Activated naive CD4-positive, alpha-beta T cell treated with anti-CD3 and anti-CD28 coated beads for 36 hours (primary cell): ENCODE measurements at regions of chr14 and their contacts with region 1.

Region 1: DNA sequence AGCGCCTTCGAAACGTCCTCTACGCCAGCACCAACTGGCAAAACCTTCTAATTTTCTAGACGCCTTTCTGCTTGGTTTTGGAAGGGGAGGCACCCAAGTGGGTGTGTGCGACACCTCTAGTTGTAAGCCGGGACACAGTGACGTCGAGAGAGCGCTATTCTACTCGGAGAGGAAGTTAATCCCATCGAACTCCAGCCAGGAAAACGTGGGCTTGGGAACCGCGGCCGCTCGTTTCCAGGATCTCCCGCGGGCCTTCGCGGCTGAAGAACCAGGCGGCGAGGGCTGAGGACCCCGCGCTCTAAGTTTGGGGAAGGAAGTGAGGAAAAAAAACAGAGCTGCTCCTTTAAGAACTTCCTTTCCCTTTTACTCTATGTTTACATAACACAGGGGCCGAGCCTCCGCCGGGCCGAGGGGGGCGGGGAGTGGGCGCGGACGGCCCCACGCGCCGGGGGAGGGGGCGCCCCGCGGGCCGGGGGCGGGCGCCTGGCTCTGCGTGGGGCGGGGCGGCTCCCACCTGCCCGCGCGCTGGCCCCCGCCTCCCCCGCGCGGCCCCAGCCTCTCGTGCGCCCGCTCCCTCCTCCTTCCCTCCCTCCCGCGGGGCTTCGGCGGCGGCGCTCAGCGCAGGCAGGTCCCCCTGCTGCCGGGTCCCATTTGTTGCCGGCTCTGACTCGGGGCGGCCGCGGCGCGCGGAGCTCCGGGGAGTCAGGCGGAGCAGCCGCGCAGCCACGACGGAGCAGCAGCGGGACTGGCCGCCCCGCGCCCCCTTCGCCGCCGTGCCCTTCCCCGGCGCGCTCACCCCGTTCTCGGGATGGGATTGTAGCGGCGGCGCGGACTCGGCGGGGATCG is at the start of gene PELI2:
- DNase-seq: peak; percentile 70
- H3K4me3 Mint-ChIP-seq: peak within 1 kb of the TSS; percentile 86
- H3K27ac Mint-ChIP-seq: peak within 1 kb of the TSS; percentile 76
- H3K4me1 Mint-ChIP-seq: peaks cover 40% of the 10 kb centered on the region
- H3K27me3 Mint-ChIP-seq: peaks cover 17% of the 10 kb centered on the region
- total RNA-seq, gene PELI2: 6.2 to 7.8 TPM

Region 2: DNA sequence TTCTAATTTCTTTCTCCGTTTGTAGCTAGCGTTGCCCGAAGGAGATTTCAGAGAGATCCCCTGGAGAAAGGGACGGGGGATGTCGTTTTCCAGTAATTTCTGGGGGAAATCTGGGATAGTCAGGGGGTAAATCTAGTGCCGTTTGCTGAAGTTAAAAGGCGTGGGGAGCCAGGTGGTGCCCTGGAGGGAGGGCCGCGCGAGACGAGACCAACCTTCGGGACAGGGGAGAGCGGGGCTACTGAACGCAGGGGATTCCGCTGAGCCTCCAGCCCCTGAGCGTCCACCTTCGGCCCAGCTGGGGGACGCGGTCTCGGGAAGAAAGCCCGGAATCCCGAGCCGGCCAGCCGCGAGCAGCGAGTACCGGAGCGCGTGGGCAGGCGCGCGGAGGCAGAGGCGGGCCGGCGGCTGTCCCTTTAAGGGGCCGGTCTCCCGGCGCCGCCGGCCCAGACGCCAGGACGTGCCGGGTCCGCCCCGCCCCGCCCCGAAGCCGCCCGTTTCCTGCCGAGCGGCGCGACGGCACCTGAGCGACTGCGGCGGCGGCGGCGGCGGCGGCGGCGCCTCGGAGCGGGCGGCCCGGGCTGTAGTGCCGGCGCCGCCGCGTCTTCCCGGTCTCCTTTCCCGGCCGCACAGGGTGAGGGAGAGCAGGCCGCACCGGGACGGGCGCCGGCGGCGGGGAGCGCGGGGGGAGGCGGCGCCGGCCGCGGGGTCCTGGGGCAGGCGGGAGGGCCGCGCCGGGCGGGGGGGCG is 538.1 kb before region 1 on chr14 and contains the start of gene KTN1:
- CTCF ChIA-PET with region 1: no interaction called
- intact Hi-C with region 1: loop called (anchors 2 kb)
- DNase-seq: peak; percentile 84
- H3K4me3 Mint-ChIP-seq: peak within 1 kb of the TSS; percentile 94
- H3K27ac Mint-ChIP-seq: peak within 1 kb of the TSS; percentile 84
- H3K4me1 Mint-ChIP-seq: peaks cover 30% of the 10 kb centered on the region
- H3K27me3 Mint-ChIP-seq: no peaks in the 10 kb centered on the region
- total RNA-seq, gene KTN1: 90.0 to 94.1 TPM

Region 3: GRCh38 chr14:55807059-55807499 is 310.9 kb before region 1 on chr14:
- CTCF ChIA-PET with region 1: no interaction called
- intact Hi-C with region 1: loop called (anchors 5 kb)
- DNase-seq: peak; percentile 87
- H3K4me3 Mint-ChIP-seq: no peak overlapping the region
- H3K27ac Mint-ChIP-seq: peak overlapping the region; percentile 75
- H3K4me1 Mint-ChIP-seq: peaks cover 37% of the 10 kb centered on the region
- H3K27me3 Mint-ChIP-seq: no peaks in the 10 kb centered on the region

Region 4: DNA sequence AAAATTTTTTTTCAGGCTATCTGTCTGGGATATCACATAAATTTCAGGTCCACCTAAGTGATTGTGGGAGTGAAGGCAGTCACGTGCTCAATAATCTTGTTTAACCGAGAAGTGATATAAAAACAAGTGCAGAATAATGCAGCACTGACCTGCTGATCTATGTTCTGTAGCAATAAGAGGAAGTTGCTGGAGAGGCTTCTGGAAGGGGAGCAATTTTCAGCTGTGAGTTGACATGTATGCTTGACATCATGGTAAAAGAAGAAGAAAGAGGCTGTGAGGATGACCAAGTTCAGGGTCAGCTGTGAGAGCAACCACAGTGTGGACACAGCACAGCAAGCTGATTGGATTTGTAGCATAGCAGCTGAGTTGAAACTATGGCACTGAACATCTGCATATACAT is 171.8 kb before region 1 on chr14:
- CTCF ChIA-PET with region 1: no interaction called
- intact Hi-C with region 1: no loop called
- DNase-seq: no peak
- H3K4me3 Mint-ChIP-seq: no peak overlapping the region
- H3K27ac Mint-ChIP-seq: no peak overlapping the region
- H3K4me1 Mint-ChIP-seq: no peaks in the 10 kb centered on the region
- H3K27me3 Mint-ChIP-seq: peaks cover 16% of the 10 kb centered on the region

Region 5: DNA sequence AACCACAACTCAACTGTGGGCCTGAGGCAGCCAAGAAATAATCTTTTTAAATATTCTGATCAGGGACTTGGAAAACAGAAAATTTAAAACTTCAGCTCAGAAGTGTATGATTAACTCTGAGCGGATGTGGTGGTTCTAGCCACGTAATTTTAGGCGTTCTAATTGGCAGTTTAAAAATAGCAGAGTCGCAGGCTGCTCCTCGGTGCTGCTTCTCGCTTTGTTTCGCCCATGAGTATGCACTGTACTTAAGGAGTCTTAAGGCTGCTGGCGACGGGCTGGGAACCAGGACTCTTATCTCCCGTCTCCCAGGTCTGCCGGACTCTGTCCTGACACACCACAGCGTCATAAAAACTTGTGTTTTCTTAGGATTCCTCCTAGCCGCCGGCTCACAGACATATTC is 113.2 kb before region 1 on chr14:
- CTCF ChIA-PET with region 1: no interaction called
- intact Hi-C with region 1: loop called (anchors 2 kb)
- DNase-seq: peak; percentile 57
- H3K4me3 Mint-ChIP-seq: no peak overlapping the region
- H3K27ac Mint-ChIP-seq: no peak overlapping the region
- H3K4me1 Mint-ChIP-seq: peaks cover 36% of the 10 kb centered on the region
- H3K27me3 Mint-ChIP-seq: peaks cover 60% of the 10 kb centered on the region

Region 6: DNA sequence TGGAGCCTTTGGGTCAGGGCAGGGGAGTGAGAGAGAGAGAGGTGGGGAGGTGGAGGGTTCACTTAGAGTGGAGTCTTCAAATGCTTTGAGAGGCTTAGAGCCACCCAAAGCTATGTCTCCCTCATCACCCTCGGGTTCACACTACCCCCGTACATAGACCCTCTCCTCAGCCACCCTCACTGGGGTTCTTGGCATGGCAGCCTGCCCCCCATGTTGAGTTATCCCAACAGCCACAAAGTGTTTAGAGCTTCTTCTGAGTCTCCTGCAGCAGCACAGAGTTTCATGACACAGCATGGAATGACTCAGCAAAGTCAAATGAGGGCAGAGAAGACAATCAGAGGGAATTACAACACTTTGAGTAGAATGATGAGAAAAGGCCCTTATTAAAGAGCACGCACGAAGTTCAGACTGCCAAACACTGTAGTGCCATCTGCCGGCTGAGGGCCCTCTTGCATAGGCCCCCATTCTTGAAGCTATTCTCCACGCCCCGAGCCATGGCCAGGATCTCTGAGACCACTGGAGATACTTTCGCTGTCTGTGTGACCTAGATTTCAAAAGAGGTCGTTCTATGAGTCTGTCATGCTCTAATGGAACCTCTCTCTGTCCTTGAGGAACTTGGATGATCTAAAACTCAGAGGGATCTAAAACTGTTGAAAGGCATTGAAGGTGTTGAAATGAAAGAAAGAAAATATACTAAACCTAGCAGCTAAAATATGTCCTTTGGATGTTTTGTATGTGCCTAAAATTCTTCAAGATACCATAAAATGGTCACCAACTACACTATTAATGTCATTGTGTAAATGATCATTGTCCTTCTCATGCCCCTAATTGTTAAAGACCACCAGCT is 222.1 kb after region 1 on chr14:
- CTCF ChIA-PET with region 1: interaction called, 3 read pairs
- intact Hi-C with region 1: loop called (anchors 2 kb)
- DNase-seq: peak; percentile 75
- H3K4me3 Mint-ChIP-seq: no peak overlapping the region
- H3K27ac Mint-ChIP-seq: no peak overlapping the region
- H3K4me1 Mint-ChIP-seq: no peaks in the 10 kb centered on the region
- H3K27me3 Mint-ChIP-seq: no peaks in the 10 kb centered on the region

Region 7: DNA sequence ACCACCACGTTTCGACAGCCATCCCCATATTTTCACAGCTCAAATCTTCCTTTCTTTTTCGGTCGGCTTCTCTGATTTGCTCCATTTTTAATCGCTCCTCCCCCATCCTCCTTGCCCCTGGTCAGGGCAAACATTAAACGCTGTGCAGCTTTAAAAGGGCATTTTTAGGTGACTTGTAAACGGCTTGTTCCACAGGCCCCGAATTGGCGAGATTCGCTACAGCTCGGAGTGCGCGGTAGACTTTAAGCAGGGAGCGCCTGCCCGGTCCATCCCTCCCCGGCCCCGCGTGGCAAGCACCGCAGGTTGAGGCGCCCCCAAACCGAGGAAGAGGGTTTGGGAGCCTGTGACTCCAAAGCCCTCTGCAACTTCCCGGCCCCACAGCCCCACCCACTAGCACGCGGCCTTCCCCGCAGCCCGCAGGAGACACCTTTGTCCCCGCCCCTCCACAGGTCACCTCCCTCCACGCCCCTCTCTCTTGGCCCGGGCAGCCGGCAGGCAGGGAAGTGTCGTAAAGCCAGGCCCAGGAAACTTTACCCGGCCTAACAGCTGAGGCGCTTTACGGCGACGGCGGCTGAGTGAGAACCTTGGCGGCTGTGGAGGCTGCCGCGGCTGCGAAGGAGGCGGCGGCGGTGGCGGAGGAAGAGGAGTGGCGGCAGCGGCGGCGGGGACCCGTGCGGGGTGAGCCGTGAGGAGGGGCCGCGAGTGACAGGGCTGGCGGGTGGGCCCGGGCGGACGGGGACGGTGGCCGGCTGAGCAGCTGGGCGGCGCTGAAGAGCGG is 1272.2 kb after region 1 on chr14 and contains the start of gene NAA30:
- CTCF ChIA-PET with region 1: no interaction called
- intact Hi-C with region 1: loop called (anchors 10 kb)
- DNase-seq: peak; percentile 95
- H3K4me3 Mint-ChIP-seq: peak within 1 kb of the TSS; percentile 89
- H3K27ac Mint-ChIP-seq: peak within 1 kb of the TSS; percentile 93
- H3K4me1 Mint-ChIP-seq: peaks cover 35% of the 10 kb centered on the region
- H3K27me3 Mint-ChIP-seq: no peaks in the 10 kb centered on the region
- total RNA-seq, gene NAA30: 12.3 to 12.5 TPM